Motor neuron (in vitro differentiated cells): ENCODE measurements at regions of chr12 and their contacts with region 1.

Region 1: DNA sequence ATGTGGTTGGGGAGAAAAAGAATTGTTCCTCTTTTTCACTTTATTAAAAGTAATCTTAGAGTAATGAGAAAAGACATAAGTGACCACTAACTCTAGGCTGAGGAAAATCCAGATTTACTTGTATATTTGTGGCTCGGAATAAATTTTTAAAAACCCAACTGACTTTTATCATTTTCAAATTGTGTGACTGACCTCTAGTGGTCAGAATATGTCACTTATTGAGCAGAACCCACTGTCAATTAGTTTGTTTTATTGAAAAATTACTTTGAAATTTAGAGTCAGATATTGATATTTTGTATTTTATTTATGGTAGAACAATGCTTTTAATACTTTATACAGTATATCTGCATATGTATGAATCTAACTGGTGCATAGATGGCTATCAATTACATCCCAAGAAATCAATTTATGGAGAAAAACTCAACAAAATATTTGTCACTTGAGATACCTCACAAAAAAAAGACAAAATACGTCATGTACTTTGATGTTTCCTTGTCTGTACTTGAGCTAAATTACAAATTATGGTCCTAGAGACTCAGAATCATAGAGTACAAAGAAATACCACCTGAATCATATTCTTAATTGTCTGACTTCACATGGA is 229.4 kb downstream of the CNTN1 start:
- ATAC-seq: no peak
- H3K4me3 ChIP-seq: no peak overlapping the region
- H3K27ac ChIP-seq: no peak overlapping the region
- H3K4me1 ChIP-seq: no peaks in the 10 kb centered on the region

Region 2: DNA sequence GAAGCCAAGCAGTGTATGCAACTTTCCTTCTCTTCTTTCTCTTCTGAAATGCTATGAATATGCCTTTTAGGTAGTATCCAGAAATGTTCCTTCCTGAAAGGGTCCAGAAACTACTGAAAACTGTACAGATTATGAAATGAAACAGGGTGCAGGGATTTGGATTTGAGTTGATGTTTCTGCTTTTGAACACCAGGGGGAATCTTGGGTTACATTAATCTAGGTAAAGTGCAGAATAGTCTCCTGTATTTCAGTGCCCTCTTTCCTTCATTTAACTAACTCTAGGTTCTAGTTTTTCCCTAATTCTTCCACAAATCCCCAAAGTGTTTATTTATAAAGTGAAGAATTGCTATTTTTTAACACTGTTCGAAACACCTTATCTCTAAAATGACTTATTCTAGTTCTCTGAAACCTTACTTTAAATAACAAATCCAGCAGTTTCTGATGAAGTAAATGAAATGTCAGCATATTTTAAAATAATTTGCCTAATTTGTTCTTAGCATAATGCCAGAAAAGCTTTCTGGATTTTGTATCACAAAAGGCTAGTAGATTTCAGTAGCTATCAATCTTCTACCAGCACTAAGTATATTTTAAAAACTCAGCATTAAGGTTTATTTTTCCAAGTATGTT is 585.0 kb before region 1 on chr12:
- in situ Hi-C with region 1: loop called in 2 of 9 experiments (anchors 10 to 25 kb)
- ATAC-seq: peak in 3 of 8 experiments; percentile 43 to 75 (median 68)
- H3K4me3 ChIP-seq: no peak overlapping the region
- H3K27ac ChIP-seq: no peak overlapping the region
- H3K4me1 ChIP-seq: no peaks in the 10 kb centered on the region

Region 3: DNA sequence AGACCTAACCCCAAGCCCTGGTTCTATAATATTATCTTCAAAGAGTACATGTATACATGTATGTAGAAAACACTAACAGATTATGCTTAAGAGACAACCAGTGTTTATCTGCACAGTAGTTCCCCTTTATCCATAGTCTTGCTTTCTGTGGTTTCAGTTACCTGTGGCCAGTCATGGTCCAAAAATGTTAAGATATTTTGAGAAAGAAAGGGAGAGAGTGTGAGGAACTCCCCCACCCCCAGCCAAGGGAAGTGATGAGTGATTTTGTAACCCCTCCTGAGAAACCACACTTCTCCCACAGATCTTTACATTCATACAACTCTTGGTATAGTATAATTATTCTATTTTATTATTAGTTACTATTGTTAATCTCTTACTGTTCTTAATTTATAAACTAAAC is 306.7 kb before region 1 on chr12:
- in situ Hi-C with region 1: loop called in 5 of 9 experiments (anchors 10 to 25 kb)
- ATAC-seq: no peak
- H3K4me3 ChIP-seq: no peak overlapping the region
- H3K27ac ChIP-seq: no peak overlapping the region
- H3K4me1 ChIP-seq: no peaks in the 10 kb centered on the region

Region 4: DNA sequence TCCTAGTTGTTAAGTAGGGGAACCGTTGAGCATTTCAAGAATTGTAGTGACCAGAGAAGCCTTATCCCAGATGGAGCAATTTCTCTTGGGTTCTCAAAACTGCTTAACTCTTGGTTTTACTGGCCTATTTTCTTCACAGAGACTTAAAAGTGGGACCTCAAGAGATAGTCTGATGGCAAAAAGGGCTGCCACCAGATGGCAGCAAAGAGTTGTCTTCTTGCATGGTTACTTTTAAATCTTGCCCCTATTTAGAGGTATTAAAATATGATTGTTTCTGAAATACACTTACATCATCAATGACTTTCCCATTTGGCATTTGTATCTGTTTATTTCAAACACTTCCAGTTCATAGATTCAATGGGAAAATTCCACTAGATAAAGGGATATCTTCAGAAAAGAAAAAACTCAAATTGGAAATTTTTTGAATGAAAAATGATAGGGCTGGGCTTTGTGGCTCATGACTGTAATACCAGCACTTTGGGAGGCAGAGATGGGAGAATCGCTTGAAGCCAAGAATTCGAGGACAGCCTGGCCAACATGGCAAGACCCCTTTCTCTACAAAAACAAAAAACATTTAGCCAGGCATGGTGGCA is 299.3 kb before region 1 on chr12:
- in situ Hi-C with region 1: loop called in 6 of 9 experiments (anchors 10 to 25 kb)
- ATAC-seq: peak in 3 of 8 experiments; percentile 41 to 52 (median 49)
- H3K4me3 ChIP-seq: no peak overlapping the region
- H3K27ac ChIP-seq: no peak overlapping the region
- H3K4me1 ChIP-seq: no peaks in the 10 kb centered on the region

Region 5: GRCh38 chr12:40647651-40648050 is 274.0 kb before region 1 on chr12:
- in situ Hi-C with region 1: loop called in 1 of 9 experiments (anchors 25 kb)
- ATAC-seq: peak in 1 of 8 experiments; percentile 30
- H3K4me3 ChIP-seq: no peak overlapping the region
- H3K27ac ChIP-seq: no peak overlapping the region
- H3K4me1 ChIP-seq: no peaks in the 10 kb centered on the region

Region 6: GRCh38 chr12:40819436-40820108 is 102.1 kb before region 1 on chr12:
- in situ Hi-C with region 1: loop called in 1 of 9 experiments (anchors 25 kb)
- ATAC-seq: peak; percentile 59 to 90 (median 69)
- H3K4me3 ChIP-seq: no peak overlapping the region
- H3K27ac ChIP-seq: no peak overlapping the region
- H3K4me1 ChIP-seq: peaks cover 6 to 8% of the 10 kb centered on the region in 2 donors

Region 7: DNA sequence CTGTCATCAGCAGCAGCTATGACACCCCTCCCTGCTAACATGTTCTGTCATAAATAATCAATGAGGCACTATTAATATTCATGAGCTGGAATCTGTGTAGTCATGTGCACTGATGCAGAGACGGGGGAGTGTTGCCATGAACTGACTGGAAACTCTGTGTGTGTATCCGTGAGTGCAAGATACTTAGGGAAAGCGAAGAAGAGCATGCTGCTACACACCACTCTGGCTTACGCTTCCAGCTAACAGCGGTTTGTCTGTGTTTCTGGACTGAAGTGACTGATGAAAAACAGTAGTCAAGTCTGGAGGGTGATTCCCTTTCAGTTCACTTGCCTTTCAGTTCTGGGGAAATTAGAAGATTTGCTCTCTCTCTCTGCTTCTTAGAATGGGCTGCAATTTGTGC is 515.9 kb after region 1 on chr12:
- in situ Hi-C with region 1: no loop called
- ATAC-seq: peak; percentile 94 to 100 (median 99)
- H3K4me3 ChIP-seq: peak overlapping the region; percentile 18 to 29 (median 25)
- H3K27ac ChIP-seq: no peak overlapping the region
- H3K4me1 ChIP-seq: peaks cover 0 to 5% of the 10 kb centered on the region in 2 donors